ENCODE measurements at regions of chr17 and their contacts with region 1.

Region 1: GRCh38 chr17:57671667-57672632 is 73.1 kb downstream of the CCDC182 start:
- DNase-seq: peak; percentile 81 to 88
- H3K4me3 ChIP-seq: no peak overlapping the region
- H3K27ac ChIP-seq: no peak overlapping the region
- H3K4me1 ChIP-seq: no peaks in the 10 kb centered on the region; a peak in 1 of 7 replicates
- H3K27me3 ChIP-seq: no peaks in the 10 kb centered on the region
- CTCF ChIP-seq: peak; percentile 97 to 99 (median 98)
- EP300 ChIP-seq: no peak
- POLR2A ChIP-seq: no peak
- RAD21 ChIP-seq: peak; percentile 93 to 97

Region 2: GRCh38 chr17:57584050-57584551 is 87.8 kb before region 1 on chr17:
- CTCF ChIA-PET with region 1: interaction called, 12 read pairs
- POLR2A ChIA-PET with region 1: no interaction called
- DNase-seq: peak in 1 of 2 experiments; percentile 10
- H3K4me3 ChIP-seq: no peak overlapping the region
- H3K27ac ChIP-seq: no peak overlapping the region
- H3K4me1 ChIP-seq: peaks cover 0 to 8% (median 3%) of the 10 kb centered on the region in 4 experiments; a peak in 4 of 7 replicates
- H3K27me3 ChIP-seq: no peaks in the 10 kb centered on the region
- CTCF ChIP-seq: peak; percentile 43 to 58 (median 49)
- EP300 ChIP-seq: no peak
- POLR2A ChIP-seq: no peak
- RAD21 ChIP-seq: peak; percentile 49 to 53

Region 3: GRCh38 chr17:57604771-57605674 is 66.9 kb before region 1 on chr17:
- CTCF ChIA-PET with region 1: interaction called, 100 read pairs
- POLR2A ChIA-PET with region 1: no interaction called
- DNase-seq: no peak
- H3K4me3 ChIP-seq: no peak overlapping the region
- H3K27ac ChIP-seq: no peak overlapping the region
- H3K4me1 ChIP-seq: peaks cover 8 to 28% (median 15%) of the 10 kb centered on the region in 4 experiments
- H3K27me3 ChIP-seq: no peaks in the 10 kb centered on the region
- CTCF ChIP-seq: peak in 1 of 3 experiments; percentile 7; a peak in 2 of 4 replicates
- EP300 ChIP-seq: no peak
- POLR2A ChIP-seq: no peak
- RAD21 ChIP-seq: no peak; a peak in 1 of 4 replicates

Region 4: DNA sequence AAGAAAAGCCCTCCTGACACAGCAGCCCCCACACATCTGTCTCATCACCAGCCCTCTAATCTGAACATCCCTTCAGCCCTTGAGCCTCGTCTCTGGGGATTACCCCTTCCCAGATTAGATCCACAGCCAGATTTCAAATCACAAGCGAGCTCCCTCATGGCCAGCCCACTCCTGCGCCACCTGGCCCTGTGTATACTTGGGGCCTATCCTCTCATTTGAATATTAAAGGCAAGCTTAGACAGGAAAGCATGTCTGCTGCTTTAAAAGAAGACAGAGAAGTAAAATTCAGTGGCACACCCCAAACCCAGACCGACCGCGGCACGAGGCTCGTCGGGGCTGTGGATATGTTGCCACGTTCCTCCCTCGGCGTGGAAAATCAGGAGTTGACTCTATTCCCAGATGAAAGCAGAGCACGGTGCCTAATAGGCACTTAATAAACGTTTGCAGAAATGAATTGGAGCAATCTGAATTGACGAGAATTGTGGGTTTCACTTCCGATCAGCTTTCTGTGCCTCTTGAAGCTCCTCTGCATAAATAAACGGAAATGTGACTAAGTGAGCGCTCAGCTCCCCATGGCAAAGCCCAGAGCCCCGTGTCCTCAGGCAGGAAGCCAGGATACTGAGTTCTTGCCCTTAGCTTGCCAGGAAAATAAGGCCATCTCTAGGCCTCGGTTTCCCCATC is 34.8 kb before region 1 on chr17:
- CTCF ChIA-PET with region 1: interaction called, 18 read pairs
- POLR2A ChIA-PET with region 1: no interaction called
- DNase-seq: no peak
- H3K4me3 ChIP-seq: no peak overlapping the region
- H3K27ac ChIP-seq: no peak overlapping the region
- H3K4me1 ChIP-seq: peaks cover 0 to 5% (median 4%) of the 10 kb centered on the region in 4 experiments; a peak in 3 of 7 replicates
- H3K27me3 ChIP-seq: no peaks in the 10 kb centered on the region
- CTCF ChIP-seq: no peak
- EP300 ChIP-seq: no peak
- POLR2A ChIP-seq: no peak
- RAD21 ChIP-seq: no peak

Region 5: GRCh38 chr17:57685505-57686132 is 13.7 kb after region 1 on chr17:
- CTCF ChIA-PET with region 1: interaction called, 14 read pairs
- POLR2A ChIA-PET with region 1: interaction called, 4 read pairs
- DNase-seq: peak in 1 of 2 experiments; percentile 44
- H3K4me3 ChIP-seq: no peak overlapping the region
- H3K27ac ChIP-seq: no peak overlapping the region
- H3K4me1 ChIP-seq: peaks cover 2 to 16% (median 4%) of the 10 kb centered on the region in 4 experiments; a peak in 6 of 7 replicates
- H3K27me3 ChIP-seq: no peaks in the 10 kb centered on the region
- CTCF ChIP-seq: no peak
- EP300 ChIP-seq: no peak
- POLR2A ChIP-seq: no peak
- RAD21 ChIP-seq: no peak

Region 6: GRCh38 chr17:57713140-57713539 is 41.2 kb after region 1 on chr17:
- CTCF ChIA-PET with region 1: interaction called, 11 read pairs
- POLR2A ChIA-PET with region 1: no interaction called
- DNase-seq: peak in 1 of 2 experiments; percentile 20
- H3K4me3 ChIP-seq: no peak overlapping the region
- H3K27ac ChIP-seq: no peak overlapping the region
- H3K4me1 ChIP-seq: peaks cover 0 to 4% (median 2%) of the 10 kb centered on the region in 4 experiments; a peak in 5 of 7 replicates
- H3K27me3 ChIP-seq: no peaks in the 10 kb centered on the region
- CTCF ChIP-seq: no peak
- EP300 ChIP-seq: no peak
- POLR2A ChIP-seq: no peak
- RAD21 ChIP-seq: no peak